Dorsolateral prefrontal cortex (tissue), 120 donors: ENCODE measurements at regions of chr3 and their contacts with region 1.

Region 1: DNA sequence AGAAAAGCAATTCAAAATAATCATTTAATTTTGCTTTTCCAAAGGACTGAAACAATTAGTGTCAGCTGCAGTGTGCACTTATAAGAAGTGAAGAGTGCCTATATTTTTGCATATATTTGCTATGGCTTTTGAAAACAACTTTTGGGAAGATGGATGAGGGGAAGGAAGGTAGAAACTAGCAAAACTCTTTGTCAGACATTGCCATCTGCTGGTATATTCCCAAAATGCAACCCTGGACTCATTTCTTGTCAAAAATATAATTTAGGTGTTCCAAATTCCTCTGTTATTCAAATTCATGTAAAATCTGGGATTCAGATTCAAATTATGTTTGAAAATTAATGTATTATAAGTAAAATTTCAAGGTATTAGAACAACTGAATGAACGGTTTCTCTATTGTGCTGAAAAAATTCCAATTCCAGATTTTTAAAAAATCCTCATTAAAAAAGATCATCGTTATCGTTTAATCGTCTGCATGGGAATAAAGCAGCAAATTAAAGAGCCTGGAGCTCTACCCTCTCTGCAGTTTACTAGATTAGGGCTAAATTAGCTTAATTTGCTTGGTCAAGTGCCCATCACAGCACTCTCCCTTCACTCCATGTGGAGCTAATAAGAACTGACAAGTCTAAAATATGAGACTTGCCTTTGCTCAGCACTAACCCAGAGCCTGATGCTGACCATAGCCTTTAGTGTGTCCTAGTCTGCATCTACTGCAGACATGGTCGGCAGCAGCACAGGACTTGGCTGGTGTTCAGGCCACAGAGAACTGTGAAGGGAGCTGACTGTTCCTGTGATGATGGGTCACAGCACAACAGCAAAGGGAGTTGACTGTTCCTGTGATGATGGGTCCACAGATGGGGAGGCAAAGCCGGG is 67.9 kb upstream of the MITF start:
- DNase-seq: peak in 2 of 10 donors; percentile 29 to 54
- H3K4me3 ChIP-seq: peak overlapping the region in 1 of 59 donors; percentile 26
- H3K27ac ChIP-seq: peak overlapping the region in 26 of 59 donors; percentile 5 to 75 (median 37)
- H3K27me3 ChIP-seq: peaks cover 0 to 4% (median 0%) of the 10 kb centered on the region in 45 donors
- CTCF ChIP-seq: peak; percentile 65 to 97 (median 86)

Region 2: DNA sequence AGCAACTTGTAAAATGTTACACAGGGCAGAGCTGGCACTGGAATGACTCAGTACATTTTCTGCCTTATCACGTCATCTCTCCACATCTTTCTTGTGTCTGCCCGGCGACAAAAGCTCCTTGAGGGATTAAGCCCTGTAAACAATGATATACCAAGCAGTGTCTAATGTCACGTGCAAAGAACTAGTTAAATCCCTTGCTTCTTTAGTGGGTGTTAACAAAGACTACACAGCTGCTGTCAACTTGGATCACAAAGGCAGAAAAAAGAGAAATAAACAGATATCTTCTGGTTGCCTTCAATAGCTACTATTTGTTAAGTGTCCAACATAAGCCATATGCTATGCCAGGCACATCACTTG is 237.4 kb before region 1 on chr3:
- intact Hi-C with region 1: loop called in 1 of 2 experiments (anchors 5 kb)
- DNase-seq: no peak
- H3K4me3 ChIP-seq: peak overlapping the region in 9 of 59 donors; percentile 3 to 40 (median 9)
- H3K27ac ChIP-seq: peak overlapping the region in 54 of 59 donors; percentile 2 to 86 (median 67)
- H3K27me3 ChIP-seq: peaks cover 0 to 17% (median 0%) of the 10 kb centered on the region in 45 donors
- CTCF ChIP-seq: no peak

Region 3: DNA sequence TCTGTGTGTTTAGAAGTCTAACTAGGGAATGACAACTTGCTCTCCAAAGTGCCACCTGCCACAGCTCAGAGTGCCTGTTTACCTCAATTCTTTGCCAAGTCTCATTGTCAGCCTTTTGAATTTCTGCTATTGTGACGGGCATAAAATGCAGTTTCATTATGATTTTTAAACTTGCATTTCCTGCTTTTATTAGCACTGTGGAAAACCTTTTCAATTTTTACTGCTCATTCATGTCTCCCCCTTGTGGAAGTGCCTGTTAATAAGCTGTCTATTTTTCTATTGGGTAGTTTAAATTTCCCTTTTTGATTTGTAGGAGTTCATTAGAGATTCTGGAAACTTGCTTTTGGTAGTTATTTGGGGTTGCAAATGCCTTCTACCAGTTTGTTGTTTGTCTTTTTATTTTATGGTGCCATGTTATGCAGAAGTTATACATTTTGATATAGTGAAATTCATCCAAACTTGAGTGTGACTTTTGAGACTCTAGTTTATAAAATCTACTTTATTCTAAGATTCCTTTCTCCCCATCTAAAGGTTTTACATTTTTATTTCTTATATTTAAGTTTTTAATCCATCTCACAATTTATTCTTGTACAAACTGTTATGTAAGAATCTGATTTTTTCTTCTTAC is 231.6 kb before region 1 on chr3:
- intact Hi-C with region 1: loop called (anchors 5 kb)
- DNase-seq: no peak
- H3K4me3 ChIP-seq: peak overlapping the region in 29 of 59 donors; percentile 8 to 47 (median 24)
- H3K27ac ChIP-seq: peak overlapping the region in 37 of 59 donors; percentile 0 to 78 (median 48)
- H3K27me3 ChIP-seq: no peaks in the 10 kb centered on the region
- CTCF ChIP-seq: peak; percentile 32 to 84 (median 70)